MCF 10A (cell line): ENCODE measurements at regions of chr11 and their contacts with region 1.

Region 1: DNA sequence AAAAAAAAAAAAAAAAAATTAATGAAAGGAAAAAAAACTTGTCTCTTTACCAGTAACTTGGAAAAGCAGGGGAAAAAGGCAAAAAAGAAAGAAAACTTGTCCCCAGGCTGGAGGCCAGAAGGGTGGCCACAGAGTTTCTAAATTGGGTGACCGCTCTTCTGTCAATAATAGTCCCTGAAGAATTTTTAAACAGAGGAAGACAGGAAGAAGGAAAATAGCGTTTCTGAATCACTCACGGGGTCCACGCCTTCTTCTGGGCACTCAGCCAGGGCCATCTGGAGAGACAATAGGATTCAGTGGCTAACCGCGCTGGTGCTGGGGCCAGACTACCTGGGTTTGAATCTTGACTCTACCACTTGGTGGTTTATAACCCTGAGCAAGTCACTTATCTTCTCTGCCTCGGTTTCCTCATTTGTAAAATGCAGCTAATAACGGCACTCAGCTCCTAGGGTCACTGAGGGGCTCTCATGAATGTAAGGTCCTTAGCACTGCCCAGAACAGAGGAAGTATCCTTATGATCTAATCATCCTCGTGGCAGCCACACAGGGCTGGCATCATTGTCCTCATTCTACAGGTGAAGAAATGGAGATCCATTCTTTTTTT is 7.0 kb downstream of the C11orf86 start:
- DNase-seq: peak; percentile 98
- H3K4me3 Mint-ChIP-seq: no peak overlapping the region
- H3K27ac Mint-ChIP-seq: no peak overlapping the region
- H3K4me1 Mint-ChIP-seq: peaks cover 38% of the 10 kb centered on the region
- H3K27me3 Mint-ChIP-seq: no peaks in the 10 kb centered on the region
- CTCF ChIP-seq: no peak

Region 2: GRCh38 chr11:66970808-66971442 is 11.2 kb before region 1 on chr11:
- CTCF ChIA-PET with region 1: interaction called, 4 read pairs
- POLR2A ChIA-PET with region 1: interaction called, 17 read pairs
- intact Hi-C with region 1: no loop called
- DNase-seq: peak; percentile 100
- H3K4me3 Mint-ChIP-seq: peak overlapping the region; percentile 7
- H3K27ac Mint-ChIP-seq: peak overlapping the region; percentile 87
- H3K4me1 Mint-ChIP-seq: peaks cover 56% of the 10 kb centered on the region
- H3K27me3 Mint-ChIP-seq: no peaks in the 10 kb centered on the region
- CTCF ChIP-seq: no peak

Region 3: GRCh38 chr11:67032830-67033555 is 50.9 kb after region 1 on chr11:
- CTCF ChIA-PET with region 1: no interaction called
- POLR2A ChIA-PET with region 1: interaction called, 3 read pairs
- intact Hi-C with region 1: loop called (anchors 5 kb)
- DNase-seq: peak; percentile 84
- H3K4me3 Mint-ChIP-seq: no peak overlapping the region
- H3K27ac Mint-ChIP-seq: peak overlapping the region; percentile 29
- H3K4me1 Mint-ChIP-seq: peaks cover 27% of the 10 kb centered on the region
- H3K27me3 Mint-ChIP-seq: no peaks in the 10 kb centered on the region
- CTCF ChIP-seq: no peak